B cell (primary cell): ENCODE measurements at regions of chr9 and their contacts with region 1.

Region 1: DNA sequence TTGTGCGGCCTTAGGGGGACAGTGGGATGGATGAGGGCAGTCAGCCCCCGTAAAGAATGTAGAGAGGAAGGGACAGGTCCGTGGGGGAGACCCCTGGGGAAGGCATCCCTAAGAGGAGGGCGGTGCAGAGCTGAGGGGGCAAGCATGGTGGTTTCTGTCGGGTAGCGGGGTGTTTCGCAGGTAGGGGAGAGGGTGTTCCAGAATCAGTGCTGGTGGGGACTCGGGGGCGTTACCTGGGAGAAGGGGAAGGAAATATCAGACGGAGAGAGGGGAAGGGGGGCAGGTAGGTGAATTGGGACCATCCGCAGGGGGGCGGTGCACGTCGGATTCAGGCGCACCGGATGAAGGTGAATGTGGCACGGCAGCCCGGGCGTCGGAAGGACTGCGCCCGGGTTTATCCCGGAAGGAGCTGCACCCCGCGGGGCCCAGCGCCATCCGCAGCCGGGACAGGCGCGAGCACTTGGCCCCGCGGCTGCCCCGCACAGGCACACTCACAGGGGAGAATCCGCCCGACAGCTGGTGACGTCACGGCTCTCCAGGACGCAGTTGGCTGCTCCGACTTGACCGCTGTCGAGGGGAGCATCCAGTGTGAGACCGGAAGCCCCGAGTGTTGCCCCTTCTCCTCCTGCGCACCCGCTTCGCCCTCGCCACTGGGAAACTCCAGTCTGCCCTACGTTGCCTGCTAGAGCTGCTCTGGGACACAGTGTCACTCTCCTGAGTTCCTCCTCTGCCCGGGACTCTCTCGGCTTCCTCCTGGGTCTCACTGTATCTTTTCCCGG is 1.3 kb downstream of the CD72 start:
- DNase-seq: peak; percentile 82
- ATAC-seq: peak; percentile 11
- H3K4me3 ChIP-seq: peak overlapping the region; percentile 80 to 91 (median 90)
- H3K4me3 Mint-ChIP-seq: peak overlapping the region; percentile 86
- H3K27ac ChIP-seq: peak overlapping the region; percentile 95 to 97
- H3K27ac Mint-ChIP-seq: peak overlapping the region; percentile 86
- H3K4me1 ChIP-seq: peaks cover 79 to 95% of the 10 kb centered on the region in 2 donors
- H3K4me1 Mint-ChIP-seq: peaks cover 94% of the 10 kb centered on the region
- H3K27me3 ChIP-seq: no peaks in the 10 kb centered on the region
- H3K27me3 Mint-ChIP-seq: no peaks in the 10 kb centered on the region
- CTCF ChIP-seq: peak; percentile 21

Region 2: GRCh38 chr9:35636135-35636876 is 19.4 kb after region 1 on chr9:
- CTCF ChIA-PET with region 1: interaction called, 357 read pairs
- POLR2A ChIA-PET with region 1: interaction called, 17 read pairs
- intact Hi-C with region 1: loop called (anchors 1 kb)
- DNase-seq: peak; percentile 77
- ATAC-seq: peak; percentile 76
- H3K4me3 ChIP-seq: peak overlapping the region in 2 of 5 experiments; percentile 5 to 28
- H3K4me3 Mint-ChIP-seq: peak overlapping the region; percentile 68
- H3K27ac ChIP-seq: peak overlapping the region; percentile 88 to 95
- H3K27ac Mint-ChIP-seq: peak overlapping the region; percentile 91
- H3K4me1 ChIP-seq: peaks cover 73 to 74% of the 10 kb centered on the region in 2 donors
- H3K4me1 Mint-ChIP-seq: peaks cover 72% of the 10 kb centered on the region
- H3K27me3 ChIP-seq: no peaks in the 10 kb centered on the region
- H3K27me3 Mint-ChIP-seq: no peaks in the 10 kb centered on the region
- CTCF ChIP-seq: no peak

Region 3: GRCh38 chr9:35716230-35716629 is 99.4 kb after region 1 on chr9:
- CTCF ChIA-PET with region 1: interaction called, 4 read pairs
- POLR2A ChIA-PET with region 1: no interaction called
- intact Hi-C with region 1: loop called (anchors 1 kb)
- DNase-seq: no peak
- ATAC-seq: no peak
- H3K4me3 ChIP-seq: no peak overlapping the region
- H3K4me3 Mint-ChIP-seq: no peak overlapping the region
- H3K27ac ChIP-seq: no peak overlapping the region
- H3K27ac Mint-ChIP-seq: peak overlapping the region; percentile 65
- H3K4me1 ChIP-seq: peaks cover 16 to 24% of the 10 kb centered on the region in 2 donors
- H3K4me1 Mint-ChIP-seq: peaks cover 26% of the 10 kb centered on the region
- H3K27me3 ChIP-seq: no peaks in the 10 kb centered on the region
- H3K27me3 Mint-ChIP-seq: no peaks in the 10 kb centered on the region
- CTCF ChIP-seq: no peak